ENCODE measurements at regions of chr20 and their contacts with region 1.

Region 1: DNA sequence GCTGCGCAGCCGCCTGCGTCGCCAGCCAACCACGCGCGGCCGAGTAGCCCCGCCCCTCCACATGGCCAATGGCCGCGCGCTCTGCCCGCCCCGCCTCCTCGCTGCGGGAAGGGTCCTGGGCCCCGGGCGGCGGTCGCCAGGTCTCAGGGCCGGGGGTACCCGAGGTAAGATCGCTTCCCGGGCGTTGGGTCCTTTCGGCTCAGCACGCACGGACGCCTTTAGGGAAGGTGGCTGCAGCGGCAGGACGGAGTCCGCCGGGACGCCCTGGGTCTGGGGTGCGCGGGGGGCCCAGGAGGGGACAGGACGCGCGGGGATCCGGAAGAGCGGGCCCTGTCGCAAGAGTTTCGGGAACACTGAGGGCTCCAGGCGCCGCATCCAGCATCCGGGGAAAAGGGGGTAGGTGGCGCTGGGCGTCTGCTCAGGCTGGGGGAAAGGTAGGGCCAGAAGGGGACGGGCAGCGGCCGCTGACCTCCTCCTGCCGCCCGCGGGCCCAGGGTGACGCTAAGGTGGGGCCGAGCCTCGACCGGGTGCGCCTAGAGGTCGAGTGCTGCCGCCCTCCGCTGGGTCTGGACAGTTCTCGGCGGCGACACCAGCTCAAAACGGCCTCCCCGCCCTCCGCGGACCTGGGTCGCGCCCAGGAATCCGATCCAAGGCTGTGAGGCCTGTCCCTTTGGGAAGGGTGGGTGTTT is at the start of gene MAVS:
- DNase-seq: peak; percentile 73 to 81 (median 79)
- H3K4me3 ChIP-seq: peak within 1 kb of the TSS; percentile 81 to 92 (median 88)
- H3K4me3 Mint-ChIP-seq: peak within 1 kb of the TSS; percentile 87 to 95
- H3K27ac ChIP-seq: peak within 1 kb of the TSS; percentile 66 to 83
- H3K27ac Mint-ChIP-seq: peak within 1 kb of the TSS; percentile 85 to 95 (median 93)
- H3K4me1 ChIP-seq: peaks cover 13 to 22% of the 10 kb centered on the region in 2 donors
- H3K4me1 Mint-ChIP-seq: peaks cover 31% of the 10 kb centered on the region
- H3K27me3 ChIP-seq: no peaks in the 10 kb centered on the region
- H3K27me3 Mint-ChIP-seq: peaks cover 0 to 1% (median 0%) of the 10 kb centered on the region in 3 donors
- CTCF ChIP-seq: no peak
- polyA plus RNA-seq, gene MAVS: 1.8 to 16.6 (median 3.2) TPM

Region 2: DNA sequence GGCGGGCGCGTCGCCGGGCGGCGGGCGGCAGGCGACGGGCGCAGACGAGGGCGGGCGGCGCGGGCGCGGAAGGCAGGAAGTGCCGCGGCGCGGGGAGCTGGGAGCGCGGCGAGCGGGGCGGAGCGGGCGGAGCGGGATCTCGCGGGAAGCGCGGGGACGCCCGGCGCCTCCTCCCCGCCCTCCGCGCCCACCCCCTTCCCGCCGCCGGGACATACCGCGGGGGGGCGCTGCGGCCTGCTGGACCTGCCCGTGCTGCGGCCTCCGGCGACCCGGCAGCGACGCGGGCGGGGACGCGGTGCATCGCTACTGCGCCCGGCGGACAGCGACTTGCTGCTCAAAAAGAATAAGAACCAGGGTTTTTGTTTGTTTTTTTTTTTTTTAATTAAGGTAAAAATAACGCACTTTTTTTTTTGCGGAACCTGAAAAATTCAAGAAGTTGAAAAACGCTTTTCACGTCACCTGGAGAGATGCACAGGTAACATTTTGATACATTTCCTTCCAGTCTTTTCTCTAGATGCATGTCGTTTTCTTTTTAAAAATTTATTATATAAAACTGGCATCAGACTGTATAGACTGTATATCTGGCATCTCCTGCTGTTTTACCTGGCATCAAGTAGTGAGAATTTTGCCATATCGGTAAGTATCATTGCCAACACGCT is 60.1 kb before region 1 on chr20 and contains the start of gene CENPB:
- intact Hi-C with region 1: loop called in 1 of 2 experiments (anchors 10 kb)
- DNase-seq: peak; percentile 85 to 89 (median 86)
- H3K4me3 ChIP-seq: peak within 1 kb of the TSS; percentile 52 to 79 (median 73)
- H3K4me3 Mint-ChIP-seq: peak within 1 kb of the TSS; percentile 87 to 94
- H3K27ac ChIP-seq: peak within 1 kb of the TSS; percentile 30 to 58
- H3K27ac Mint-ChIP-seq: peak within 1 kb of the TSS; percentile 68 to 91 (median 86)
- H3K4me1 ChIP-seq: peaks cover 26 to 39% of the 10 kb centered on the region in 2 donors
- H3K4me1 Mint-ChIP-seq: peaks cover 31% of the 10 kb centered on the region
- H3K27me3 ChIP-seq: no peaks in the 10 kb centered on the region
- H3K27me3 Mint-ChIP-seq: peaks cover 0 to 2% (median 1%) of the 10 kb centered on the region in 3 donors
- CTCF ChIP-seq: peak; percentile 90
- polyA plus RNA-seq, gene CENPB: 1.1 to 18.9 (median 1.4) TPM

Region 3: GRCh38 chr20:3820048-3820900 is 26.6 kb before region 1 on chr20 and contains the start of gene AP5S1:
- intact Hi-C with region 1: loop called in 1 of 2 experiments (anchors 2 kb)
- DNase-seq: peak; percentile 95 to 98 (median 96)
- H3K4me3 ChIP-seq: peak within 1 kb of the TSS; percentile 69 to 96 (median 87)
- H3K4me3 Mint-ChIP-seq: peak within 1 kb of the TSS; percentile 83 to 86
- H3K27ac ChIP-seq: peak within 1 kb of the TSS; percentile 87 to 97
- H3K27ac Mint-ChIP-seq: peak within 1 kb of the TSS; percentile 95 to 99 (median 98)
- H3K4me1 ChIP-seq: peaks cover 18 to 30% of the 10 kb centered on the region in 2 donors
- H3K4me1 Mint-ChIP-seq: peaks cover 20% of the 10 kb centered on the region
- H3K27me3 ChIP-seq: no peaks in the 10 kb centered on the region
- H3K27me3 Mint-ChIP-seq: peaks cover 0 to 2% (median 0%) of the 10 kb centered on the region in 3 donors
- CTCF ChIP-seq: peak; percentile 99
- polyA plus RNA-seq, gene AP5S1: 6.6 to 10.8 (median 8.6) TPM

Region 4: DNA sequence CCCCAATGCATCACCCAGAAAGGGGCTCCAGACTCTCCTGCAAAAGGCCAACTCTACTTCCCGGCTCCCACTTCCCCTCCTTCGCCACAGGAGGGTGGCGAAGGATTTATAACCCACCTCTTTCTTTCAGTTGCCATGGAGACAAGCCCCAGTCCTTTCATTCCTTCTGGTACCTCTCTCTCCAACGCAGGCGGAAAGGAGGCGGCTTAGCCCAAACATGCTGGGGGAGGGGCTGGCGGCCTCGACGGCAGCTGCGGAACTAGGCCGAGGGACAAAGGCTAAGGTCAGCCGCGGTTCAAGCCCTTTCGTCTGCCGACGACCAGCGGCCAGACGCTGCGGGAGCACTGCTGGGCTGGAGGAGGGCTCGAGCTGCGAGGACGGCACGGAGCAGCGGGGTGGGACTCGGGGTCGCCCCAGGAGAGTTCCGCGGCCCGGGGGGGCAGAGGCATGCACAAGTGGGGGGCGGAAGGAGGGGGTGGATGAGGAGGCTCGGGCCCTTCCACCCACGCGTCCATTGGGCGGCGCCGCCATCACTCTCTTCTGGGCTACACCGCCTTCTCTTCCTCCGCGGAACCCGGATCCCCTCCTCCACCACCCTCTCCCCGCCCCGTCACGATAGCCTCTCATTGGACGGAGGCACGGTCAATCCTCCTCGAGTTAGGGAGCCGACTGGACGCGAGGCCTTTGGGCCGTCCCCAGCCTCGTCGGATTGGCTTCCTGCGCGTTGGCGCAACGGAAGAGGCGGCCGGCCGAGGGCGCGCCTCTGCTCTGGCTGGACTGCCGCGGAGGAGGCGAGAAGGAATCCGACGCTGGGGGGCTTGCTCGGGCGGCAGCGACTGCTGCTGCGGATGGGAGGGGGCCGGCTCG is 42.0 kb after region 1 on chr20 and contains the start of gene PANK2:
- intact Hi-C with region 1: loop called in 1 of 2 experiments (anchors 5 kb)
- DNase-seq: peak; percentile 95 to 97 (median 96)
- H3K4me3 ChIP-seq: peak within 1 kb of the TSS; percentile 93 to 96 (median 94)
- H3K4me3 Mint-ChIP-seq: peak within 1 kb of the TSS; percentile 95 to 98
- H3K27ac ChIP-seq: peak within 1 kb of the TSS; percentile 77 to 85
- H3K27ac Mint-ChIP-seq: peak within 1 kb of the TSS; percentile 95 to 98 (median 97)
- H3K4me1 ChIP-seq: peaks cover 44 to 49% of the 10 kb centered on the region in 2 donors
- H3K4me1 Mint-ChIP-seq: peaks cover 50% of the 10 kb centered on the region
- H3K27me3 ChIP-seq: no peaks in the 10 kb centered on the region
- H3K27me3 Mint-ChIP-seq: peaks cover 0 to 2% (median 1%) of the 10 kb centered on the region in 3 donors
- CTCF ChIP-seq: no peak
- polyA plus RNA-seq, gene PANK2: 36.8 to 65.7 (median 48.0) TPM